Heart left ventricle (tissue), 16 donors: ENCODE measurements at regions of chr11 and their contacts with region 1.

Region 1: GRCh38 chr11:118401151-118401878 is at the start of gene ATP5MG:
- DNase-seq: peak; percentile 92 to 95 (median 95)
- ATAC-seq: peak; percentile 76 to 90 (median 86)
- H3K4me3 ChIP-seq: peak within 1 kb of the TSS; percentile 76 to 98 (median 83)
- H3K27ac ChIP-seq: peak within 1 kb of the TSS; percentile 88 to 95 (median 93)
- H3K4me1 ChIP-seq: peaks cover 2 to 50% (median 41%) of the 10 kb centered on the region in 12 donors
- H3K27me3 ChIP-seq: no peaks in the 10 kb centered on the region
- CTCF ChIP-seq: peak in 5 of 12 donors; percentile 11 to 39 (median 36)
- POLR2A ChIP-seq: peak in 1 of 2 donors; percentile 68
- total RNA-seq, gene ATP5MG: 96.4 to 702 (median 559) TPM

Region 2: DNA sequence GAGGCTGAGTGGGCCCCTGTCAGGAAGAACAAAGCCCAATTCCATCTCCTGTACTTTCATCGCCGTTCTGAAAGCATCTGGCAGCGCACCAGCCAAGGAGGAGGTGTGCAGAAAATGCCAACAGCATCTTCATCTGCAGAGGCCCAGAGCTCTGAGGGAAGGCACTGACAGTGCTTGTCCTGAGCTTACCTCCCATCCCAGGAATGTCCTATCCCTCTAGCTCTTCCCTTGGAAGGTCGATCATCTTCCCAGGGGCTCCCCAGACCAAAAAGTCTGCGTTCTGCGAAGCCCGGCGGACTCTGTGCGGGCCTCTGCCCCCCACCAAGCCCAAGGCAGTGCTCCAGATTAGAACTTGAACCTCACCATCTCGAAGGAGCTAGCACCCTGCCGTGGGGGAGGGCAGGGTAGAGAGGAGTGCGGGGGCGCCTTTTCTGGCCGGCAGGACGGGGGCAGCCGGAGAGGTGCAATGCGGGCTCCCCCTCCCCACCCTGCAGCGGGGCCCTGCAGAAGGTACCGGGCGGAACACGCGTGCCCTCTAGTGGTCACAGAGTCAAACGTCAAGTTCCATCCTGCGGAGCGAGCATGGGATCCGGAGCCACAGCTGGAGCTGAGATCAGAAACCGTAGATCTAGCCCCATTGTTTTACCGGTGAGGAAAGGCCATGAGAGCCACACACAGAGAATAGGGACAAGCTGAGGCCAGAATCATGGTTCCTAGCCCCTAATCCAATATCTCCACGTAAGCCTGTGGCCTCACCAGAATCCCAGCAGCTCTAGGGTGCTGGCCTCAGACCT is 229.8 kb before region 1 on chr11:
- intact Hi-C with region 1: no loop called
- DNase-seq: peak; percentile 72 to 86 (median 79)
- ATAC-seq: peak; percentile 35 to 71 (median 68)
- H3K4me3 ChIP-seq: peak overlapping the region in 4 of 12 donors; percentile 17 to 34 (median 21)
- H3K27ac ChIP-seq: peak overlapping the region in 2 of 12 donors; percentile 20 to 44
- H3K4me1 ChIP-seq: peaks cover 3 to 46% (median 18%) of the 10 kb centered on the region in 12 donors
- H3K27me3 ChIP-seq: peaks cover 0 to 8% (median 0%) of the 10 kb centered on the region in 9 donors
- CTCF ChIP-seq: peak in 11 of 12 donors; percentile 86 to 94 (median 91)
- POLR2A ChIP-seq: no peak

Region 3: DNA sequence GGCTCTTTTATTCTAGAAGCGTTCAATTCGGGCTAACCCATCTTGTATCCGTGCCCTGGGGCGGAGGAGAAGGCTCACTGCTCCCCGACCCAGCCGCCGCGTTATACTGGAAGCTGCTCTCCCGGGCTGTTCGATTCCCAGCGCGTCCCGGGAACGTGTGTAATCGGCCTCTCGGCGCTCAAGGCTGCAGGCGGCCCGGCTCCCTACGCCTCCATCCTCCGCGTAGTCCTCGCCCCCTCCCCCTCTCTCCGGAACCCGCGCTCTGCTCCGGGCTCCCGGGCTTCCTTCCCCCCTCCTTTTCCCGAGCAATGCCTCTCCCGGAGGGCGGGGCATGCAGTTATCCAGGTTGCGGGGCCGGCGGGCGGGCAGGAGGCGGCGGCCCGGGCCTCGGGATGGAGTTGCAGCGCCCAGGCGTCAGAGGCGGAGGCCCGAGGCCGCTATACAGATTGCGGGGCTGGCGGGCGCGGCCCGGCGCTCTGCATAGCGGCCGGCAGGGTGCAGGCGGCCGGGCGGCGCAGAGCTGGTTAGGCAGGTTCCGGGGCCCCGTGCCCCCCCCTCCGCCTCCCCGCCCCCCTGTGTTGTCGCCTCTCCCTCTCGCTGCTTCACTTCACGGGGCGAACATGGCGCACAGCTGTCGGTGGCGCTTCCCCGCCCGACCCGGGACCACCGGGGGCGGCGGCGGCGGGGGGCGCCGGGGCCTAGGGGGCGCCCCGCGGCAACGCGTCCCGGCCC is 34.7 kb after region 1 on chr11 and contains the start of gene KMT2A:
- intact Hi-C with region 1: loop called in 9 of 10 experiments (anchors 1 to 5 kb)
- DNase-seq: peak; percentile 98 to 99 (median 99)
- ATAC-seq: peak; percentile 93 to 96 (median 94)
- H3K4me3 ChIP-seq: peak within 1 kb of the TSS; percentile 81 to 99 (median 96)
- H3K27ac ChIP-seq: peak within 1 kb of the TSS; percentile 78 to 96 (median 90)
- H3K4me1 ChIP-seq: peaks cover 0 to 57% (median 34%) of the 10 kb centered on the region in 12 donors
- H3K27me3 ChIP-seq: no peaks in the 10 kb centered on the region
- CTCF ChIP-seq: peak in 1 of 12 donors; percentile 8
- POLR2A ChIP-seq: peak in 1 of 2 donors; percentile 50
- total RNA-seq, gene KMT2A: 16.5 to 117 (median 41.5) TPM

Region 4: GRCh38 chr11:118763041-118763440 is 361.7 kb after region 1 on chr11:
- intact Hi-C with region 1: loop called in 1 of 10 experiments (anchors 5 kb)
- DNase-seq: no peak
- ATAC-seq: no peak
- H3K4me3 ChIP-seq: no peak overlapping the region
- H3K27ac ChIP-seq: no peak overlapping the region
- H3K4me1 ChIP-seq: peaks cover 0 to 21% (median 14%) of the 10 kb centered on the region in 12 donors
- H3K27me3 ChIP-seq: no peaks in the 10 kb centered on the region
- CTCF ChIP-seq: no peak
- POLR2A ChIP-seq: no peak